Activated CD8-positive, alpha-beta T cell treated with anti-CD3 and anti-CD28 coated beads for 36 hours (primary cell): ENCODE measurements at regions of chr10 and their contacts with region 1.

Region 1: GRCh38 chr10:88553116-88553752 is 29.9 kb downstream of the RNLS start:
- DNase-seq: peak; percentile 58
- ATAC-seq: peak; percentile 93
- H3K4me3 Mint-ChIP-seq: no peak overlapping the region
- H3K27ac Mint-ChIP-seq: no peak overlapping the region
- H3K4me1 Mint-ChIP-seq: peaks cover 4% of the 10 kb centered on the region
- H3K27me3 Mint-ChIP-seq: no peaks in the 10 kb centered on the region
- CTCF ChIP-seq: peak; percentile 54

Region 2: DNA sequence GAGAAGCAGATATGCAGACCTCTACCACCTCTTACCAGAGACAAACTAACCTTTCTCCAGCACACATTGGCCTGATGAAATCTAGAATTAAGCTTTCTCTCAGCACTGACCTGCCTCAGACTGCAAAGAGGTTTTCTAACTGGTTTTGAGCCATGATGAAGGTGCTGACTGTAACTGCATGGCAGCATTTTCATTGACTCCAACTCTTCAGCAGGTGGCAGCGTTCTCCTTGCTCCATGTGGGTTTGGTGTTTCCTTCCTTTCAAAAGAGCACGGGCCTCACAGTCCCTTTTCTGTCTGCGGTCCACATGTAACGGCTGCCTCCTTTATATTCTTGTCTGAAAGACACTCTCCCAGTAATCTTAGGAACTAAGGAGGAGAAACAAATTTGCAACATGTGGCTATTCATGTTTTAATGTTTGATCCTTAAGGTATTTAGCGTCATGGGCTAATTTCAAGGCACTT is 702.5 kb before region 1 on chr10:
- CTCF ChIA-PET with region 1: interaction called, 11 read pairs
- POLR2A ChIA-PET with region 1: no interaction called
- intact Hi-C with region 1: loop called (anchors 5 kb)
- DNase-seq: peak; percentile 69
- ATAC-seq: peak; percentile 89
- H3K4me3 Mint-ChIP-seq: no peak overlapping the region
- H3K27ac Mint-ChIP-seq: no peak overlapping the region
- H3K4me1 Mint-ChIP-seq: peaks cover 16% of the 10 kb centered on the region
- H3K27me3 Mint-ChIP-seq: no peaks in the 10 kb centered on the region
- CTCF ChIP-seq: peak; percentile 55

Region 3: DNA sequence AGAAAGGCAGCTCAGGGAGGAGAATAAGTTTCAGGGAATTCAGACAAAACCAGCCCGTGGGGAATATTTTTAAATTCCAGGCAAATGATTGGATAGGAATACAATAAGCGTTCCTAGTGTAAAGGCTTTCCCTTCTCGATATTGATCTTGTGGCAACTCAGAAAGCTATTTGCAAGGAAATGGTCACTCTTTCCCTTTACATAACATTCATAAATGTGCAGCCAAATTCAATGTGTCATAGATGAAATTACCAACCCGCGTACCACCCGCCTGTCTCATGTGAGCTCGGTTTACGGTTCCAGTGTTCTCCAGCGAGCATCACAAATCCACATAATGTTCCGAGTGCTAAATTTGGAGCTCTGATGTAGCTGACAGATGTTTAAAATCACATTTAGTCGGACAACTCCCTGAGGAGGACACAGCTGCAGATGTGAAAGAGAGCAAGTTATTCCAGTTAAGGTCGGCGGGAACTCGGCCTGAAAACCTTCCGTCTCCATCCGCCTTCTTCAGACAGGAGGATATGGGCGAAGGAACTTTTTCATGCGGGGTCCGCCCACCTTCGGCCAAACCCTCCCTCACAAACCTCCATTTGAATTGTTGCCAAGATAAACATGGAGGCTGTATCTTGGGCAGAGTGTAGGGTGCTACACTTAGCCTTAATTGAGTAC is 297.1 kb before region 1 on chr10:
- CTCF ChIA-PET with region 1: no interaction called
- POLR2A ChIA-PET with region 1: no interaction called
- intact Hi-C with region 1: no loop called
- DNase-seq: no peak
- ATAC-seq: no peak
- H3K4me3 Mint-ChIP-seq: no peak overlapping the region
- H3K27ac Mint-ChIP-seq: no peak overlapping the region
- H3K4me1 Mint-ChIP-seq: peaks cover 10% of the 10 kb centered on the region
- H3K27me3 Mint-ChIP-seq: no peaks in the 10 kb centered on the region
- CTCF ChIP-seq: no peak